ENCODE measurements at regions of chr5 and their contacts with region 1.

Region 1: GRCh38 chr5:177497292-177498033 is at the start of gene PDLIM7:
- DNase-seq: peak; percentile 94 to 98 (median 97)
- H3K4me3 ChIP-seq: peak within 1 kb of the TSS; percentile 63
- H3K27ac ChIP-seq: peak within 1 kb of the TSS; percentile 62 to 65
- H3K4me1 ChIP-seq: peaks cover 13% of the 10 kb centered on the region
- H3K27me3 ChIP-seq: no peaks in the 10 kb centered on the region
- CTCF ChIP-seq: peak in 1 of 3 donors; percentile 14
- EP300 ChIP-seq: no peak
- POLR2A ChIP-seq: peak; percentile 90
- total RNA-seq, gene PDLIM7: 32.7 to 243 (median 151) TPM

Region 2: GRCh38 chr5:177311723-177312648 is 185.5 kb before region 1 on chr5 and contains the start of gene MXD3:
- intact Hi-C with region 1: loop called in 1 of 4 experiments (anchors 10 kb)
- DNase-seq: peak; percentile 95 to 98 (median 97)
- H3K4me3 ChIP-seq: peak within 1 kb of the TSS; percentile 52
- H3K27ac ChIP-seq: no peak within 1 kb of the TSS
- H3K4me1 ChIP-seq: peaks cover 3% of the 10 kb centered on the region
- H3K27me3 ChIP-seq: no peaks in the 10 kb centered on the region
- CTCF ChIP-seq: no peak
- EP300 ChIP-seq: no peak
- POLR2A ChIP-seq: no peak
- total RNA-seq, gene MXD3: 3.2 to 9.8 (median 6.2) TPM

Region 3: GRCh38 chr5:177390363-177391300 is 106.8 kb before region 1 on chr5:
- intact Hi-C with region 1: loop called in 3 of 4 experiments (anchors 2 to 5 kb)
- DNase-seq: peak; percentile 69 to 84 (median 81)
- H3K4me3 ChIP-seq: no peak overlapping the region
- H3K27ac ChIP-seq: no peak overlapping the region
- H3K4me1 ChIP-seq: no peaks in the 10 kb centered on the region
- H3K27me3 ChIP-seq: no peaks in the 10 kb centered on the region
- CTCF ChIP-seq: peak; percentile 93 to 97 (median 95)
- EP300 ChIP-seq: no peak
- POLR2A ChIP-seq: no peak

Region 4: GRCh38 chr5:177403792-177404640 is 93.4 kb before region 1 on chr5:
- intact Hi-C with region 1: loop called in 2 of 4 experiments (anchors 2 to 5 kb)
- DNase-seq: peak; percentile 79 to 88 (median 84)
- H3K4me3 ChIP-seq: peak overlapping the region; percentile 33
- H3K27ac ChIP-seq: no peak overlapping the region
- H3K4me1 ChIP-seq: peaks cover 9% of the 10 kb centered on the region
- H3K27me3 ChIP-seq: peaks cover 5% of the 10 kb centered on the region
- CTCF ChIP-seq: peak; percentile 62 to 83 (median 81)
- EP300 ChIP-seq: no peak
- POLR2A ChIP-seq: no peak